ENCODE measurements at regions of chr2 and their contacts with region 1.

Region 1: GRCh38 chr2:69306822-69307578 is 80.0 kb downstream of the GFPT1 start:
- DNase-seq: peak; percentile 54
- H3K4me3 ChIP-seq: peak overlapping the region; percentile 55 to 70 (median 65)
- H3K27ac ChIP-seq: no peak overlapping the region
- H3K4me1 ChIP-seq: peaks cover 19% of the 10 kb centered on the region
- H3K27me3 ChIP-seq: no peaks in the 10 kb centered on the region
- CTCF ChIP-seq: peak; percentile 75 to 84

Region 2: DNA sequence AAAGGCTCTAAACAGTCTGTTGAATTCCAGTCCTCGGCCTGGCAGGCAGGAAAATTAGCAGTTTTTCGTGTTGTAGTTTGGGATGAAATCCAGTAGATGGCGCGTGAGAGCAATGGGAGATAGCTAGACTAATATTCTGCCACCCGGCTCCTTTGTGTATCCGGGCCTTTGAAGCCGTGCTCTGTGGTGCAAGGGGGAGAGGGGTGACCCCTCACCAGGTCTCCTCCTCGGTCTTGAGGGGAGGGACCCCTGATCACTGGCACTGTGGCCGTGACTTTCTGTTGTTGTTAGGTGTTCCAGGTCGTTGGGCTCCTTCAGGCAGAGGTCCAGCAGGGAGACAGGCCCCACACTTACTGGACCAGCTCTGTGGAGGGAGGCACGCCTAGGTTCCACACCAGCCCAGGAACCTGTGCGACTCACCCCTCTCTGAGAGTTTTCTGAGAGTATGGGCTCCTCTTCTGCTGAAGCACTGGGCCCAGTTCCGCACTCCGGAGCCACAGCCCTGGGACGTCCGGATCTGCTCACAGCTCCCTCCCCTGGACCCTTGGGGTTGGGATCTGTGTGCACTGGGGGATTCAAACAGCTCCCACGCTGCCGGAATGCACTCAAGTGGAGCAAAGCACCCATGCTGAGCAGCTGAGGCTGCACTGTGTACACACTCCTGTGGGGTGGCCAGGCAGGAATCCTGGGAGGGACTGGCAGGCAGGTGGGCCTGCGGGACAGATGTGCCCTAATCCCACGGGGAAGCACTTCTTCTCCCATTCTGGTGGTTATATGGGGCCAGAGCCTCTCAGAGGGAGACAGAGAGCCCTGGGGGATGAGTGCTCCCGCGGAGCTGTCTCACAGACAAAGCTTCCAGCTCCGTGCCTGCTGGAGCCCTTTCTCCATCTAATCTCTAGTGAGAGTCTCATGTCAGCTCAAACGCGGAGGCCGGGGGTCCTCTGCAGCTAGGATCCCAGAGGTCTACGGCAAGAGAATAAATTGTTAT is 363.1 kb before region 1 on chr2:
- CTCF ChIA-PET with region 1: no interaction called
- dilution Hi-C with region 1: no loop called
- in situ Hi-C with region 1: no loop called
- intact Hi-C with region 1: loop called (anchors 1 kb)
- DNase-seq: peak; percentile 61
- H3K4me3 ChIP-seq: no peak overlapping the region
- H3K27ac ChIP-seq: no peak overlapping the region
- H3K4me1 ChIP-seq: no peaks in the 10 kb centered on the region
- H3K27me3 ChIP-seq: no peaks in the 10 kb centered on the region
- CTCF ChIP-seq: peak; percentile 63 to 84

Region 3: DNA sequence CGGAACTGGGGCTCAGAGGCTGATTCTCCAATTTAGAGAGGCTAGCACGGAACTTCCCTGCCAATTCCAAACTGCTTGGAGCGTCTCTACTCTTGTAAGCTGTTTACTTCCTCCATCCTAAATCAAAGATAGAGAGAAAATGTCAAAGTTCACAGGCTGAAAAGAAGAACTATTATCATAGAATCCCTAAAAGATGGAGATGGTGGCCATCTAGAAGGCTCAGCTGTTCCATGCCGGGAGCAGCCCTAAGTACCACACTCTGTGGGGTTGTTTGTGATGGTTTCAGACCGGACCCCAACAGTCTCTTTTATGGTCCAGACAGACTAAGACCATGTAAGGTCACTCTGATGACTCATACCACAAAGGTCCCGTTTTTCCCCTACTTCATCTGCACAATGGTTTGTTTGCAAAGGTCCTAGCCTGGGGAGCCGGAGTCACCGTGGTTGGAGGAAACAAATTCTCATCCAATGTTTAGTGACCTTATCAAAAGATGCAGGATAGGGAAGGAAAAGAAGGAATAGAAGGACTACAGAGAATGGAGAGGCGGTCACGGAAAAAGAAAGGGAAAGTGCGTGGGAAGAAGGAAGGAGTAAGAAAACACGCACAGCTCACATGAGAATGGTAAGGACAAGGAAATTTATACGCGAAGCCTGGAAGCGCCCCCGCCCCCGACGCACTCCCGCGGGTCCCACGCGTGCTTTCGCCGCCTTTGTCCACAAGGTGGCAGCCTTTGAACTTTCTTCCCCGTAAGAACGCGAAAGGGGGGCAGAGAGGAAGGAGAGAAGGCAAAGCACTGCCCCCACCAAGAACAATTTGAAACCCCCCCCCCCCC is 294.5 kb before region 1 on chr2:
- CTCF ChIA-PET with region 1: no interaction called
- dilution Hi-C with region 1: no loop called
- in situ Hi-C with region 1: loop called in 1 of 2 experiments (anchors 5 kb)
- intact Hi-C with region 1: loop called (anchors 1 kb)
- DNase-seq: no peak
- H3K4me3 ChIP-seq: peak overlapping the region; percentile 90 to 95 (median 94)
- H3K27ac ChIP-seq: peak overlapping the region; percentile 44
- H3K4me1 ChIP-seq: peaks cover 13% of the 10 kb centered on the region
- H3K27me3 ChIP-seq: no peaks in the 10 kb centered on the region
- CTCF ChIP-seq: peak; percentile 54 to 77

Region 4: DNA sequence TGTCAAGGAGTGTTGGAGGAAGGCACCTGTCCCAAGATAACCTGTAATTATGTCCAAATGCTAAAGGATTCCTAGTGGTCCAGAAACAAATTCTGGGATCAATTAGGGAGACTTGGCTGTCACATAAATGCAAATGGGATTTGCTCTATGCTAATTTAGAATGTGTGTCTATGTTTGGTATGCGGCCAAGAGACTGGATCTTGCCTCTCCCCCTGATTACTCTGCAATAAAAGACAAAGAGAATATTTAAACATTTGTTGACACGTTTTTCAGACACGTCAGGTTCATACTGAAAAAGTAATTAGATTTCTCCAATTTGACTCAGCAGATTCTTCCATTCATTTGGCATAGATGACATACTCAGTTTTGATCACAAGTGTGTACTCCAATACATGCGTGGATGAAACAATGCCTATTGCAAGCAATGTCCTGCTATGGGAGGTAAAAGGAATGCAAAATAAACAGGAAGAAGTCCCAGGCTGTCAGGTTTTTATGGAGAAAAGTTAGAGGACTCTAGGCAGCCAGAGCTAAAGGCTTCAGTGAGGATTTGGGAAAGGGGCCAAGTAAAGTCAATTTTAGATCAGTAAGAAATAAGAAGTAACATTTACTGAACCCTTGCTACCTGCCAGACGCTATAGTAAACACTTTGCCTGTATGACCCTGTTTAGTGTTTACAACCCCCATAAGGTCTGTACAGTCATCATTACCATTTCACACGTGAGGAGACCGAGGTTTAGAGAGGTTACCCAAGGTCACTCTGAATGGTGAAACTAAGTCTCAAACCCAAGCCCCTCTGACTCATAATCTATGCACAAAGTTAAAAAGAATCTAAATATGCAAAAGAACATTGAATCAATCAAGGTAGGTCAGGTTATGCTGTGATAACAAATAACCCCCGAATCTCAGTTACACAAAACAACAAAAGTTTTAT is 286.2 kb before region 1 on chr2:
- CTCF ChIA-PET with region 1: no interaction called
- dilution Hi-C with region 1: loop called (anchors 5 kb)
- in situ Hi-C with region 1: loop called in 1 of 2 experiments (anchors 10 kb)
- intact Hi-C with region 1: no loop called
- DNase-seq: no peak
- H3K4me3 ChIP-seq: no peak overlapping the region
- H3K27ac ChIP-seq: no peak overlapping the region
- H3K4me1 ChIP-seq: peaks cover 28% of the 10 kb centered on the region
- H3K27me3 ChIP-seq: no peaks in the 10 kb centered on the region
- CTCF ChIP-seq: no peak

Region 5: DNA sequence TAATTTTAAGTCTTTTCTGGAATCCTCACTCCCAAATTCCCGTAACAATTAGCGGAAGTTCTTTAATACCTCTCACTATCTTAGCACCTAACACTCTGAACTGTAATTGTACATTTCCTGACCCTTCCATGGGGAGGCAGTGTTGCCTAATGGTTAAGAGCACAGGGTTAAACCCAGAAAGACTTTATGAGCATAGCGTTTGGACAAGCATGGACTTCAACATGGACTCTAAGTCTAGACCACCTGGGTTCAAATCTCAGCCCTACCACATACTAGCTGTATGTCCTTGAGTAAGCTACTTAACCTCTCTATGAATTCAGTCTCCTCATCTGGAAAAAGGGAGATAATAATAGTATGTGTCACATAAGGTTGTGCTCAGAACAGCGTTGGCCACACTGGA is 281.0 kb before region 1 on chr2:
- CTCF ChIA-PET with region 1: no interaction called
- dilution Hi-C with region 1: loop called (anchors 5 kb)
- in situ Hi-C with region 1: loop called in 1 of 2 experiments (anchors 10 kb)
- intact Hi-C with region 1: loop called (anchors 1 kb)
- DNase-seq: peak; percentile 54
- H3K4me3 ChIP-seq: no peak overlapping the region
- H3K27ac ChIP-seq: no peak overlapping the region
- H3K4me1 ChIP-seq: peaks cover 16% of the 10 kb centered on the region
- H3K27me3 ChIP-seq: no peaks in the 10 kb centered on the region
- CTCF ChIP-seq: peak; percentile 71 to 77

Region 6: DNA sequence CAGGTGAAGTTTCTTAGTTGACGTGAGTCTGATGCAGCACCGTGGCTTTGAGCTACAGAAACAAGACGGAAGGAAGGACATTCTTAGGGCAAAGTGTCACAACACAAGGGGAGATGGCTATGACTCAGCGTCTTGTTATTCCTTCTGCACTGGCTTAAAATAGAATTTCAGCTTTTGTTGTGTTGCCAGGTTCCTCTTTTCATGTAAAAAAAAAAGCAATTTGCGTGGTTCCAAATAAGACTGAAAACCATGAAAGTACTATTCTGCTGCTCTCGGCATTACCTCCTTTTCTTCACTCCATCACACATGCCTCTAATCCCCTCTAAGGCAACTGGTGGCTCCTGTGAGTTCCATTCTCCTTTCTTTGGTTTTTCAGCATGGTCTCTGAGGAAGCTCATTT is 143.9 kb before region 1 on chr2:
- CTCF ChIA-PET with region 1: no interaction called
- dilution Hi-C with region 1: no loop called
- in situ Hi-C with region 1: loop called (anchors 5 kb)
- intact Hi-C with region 1: loop called (anchors 1 kb)
- DNase-seq: peak; percentile 55
- H3K4me3 ChIP-seq: no peak overlapping the region
- H3K27ac ChIP-seq: peak overlapping the region; percentile 2
- H3K4me1 ChIP-seq: peaks cover 46% of the 10 kb centered on the region
- H3K27me3 ChIP-seq: no peaks in the 10 kb centered on the region
- CTCF ChIP-seq: no peak

Region 7: GRCh38 chr2:69177785-69178636 is 129.0 kb before region 1 on chr2:
- CTCF ChIA-PET with region 1: no interaction called
- dilution Hi-C with region 1: no loop called
- in situ Hi-C with region 1: no loop called
- intact Hi-C with region 1: loop called (anchors 5 kb)
- DNase-seq: peak; percentile 71
- H3K4me3 ChIP-seq: no peak overlapping the region
- H3K27ac ChIP-seq: peak overlapping the region; percentile 48
- H3K4me1 ChIP-seq: peaks cover 26% of the 10 kb centered on the region
- H3K27me3 ChIP-seq: no peaks in the 10 kb centered on the region
- CTCF ChIP-seq: no peak

Region 8: GRCh38 chr2:69255760-69256159 is 51.2 kb before region 1 on chr2:
- CTCF ChIA-PET with region 1: no interaction called
- dilution Hi-C with region 1: no loop called
- in situ Hi-C with region 1: no loop called
- intact Hi-C with region 1: no loop called
- DNase-seq: no peak
- H3K4me3 ChIP-seq: no peak overlapping the region
- H3K27ac ChIP-seq: no peak overlapping the region
- H3K4me1 ChIP-seq: no peaks in the 10 kb centered on the region
- H3K27me3 ChIP-seq: no peaks in the 10 kb centered on the region
- CTCF ChIP-seq: no peak